ENCODE measurements at regions of chr2 and their contacts with region 1.

Region 1: GRCh38 chr2:174341286-174341994 is 6.7 kb downstream of the SP9 start:
- DNase-seq: peak; percentile 83
- H3K4me3 Mint-ChIP-seq: peak overlapping the region; percentile 64
- H3K27ac Mint-ChIP-seq: peak overlapping the region; percentile 84
- H3K4me1 Mint-ChIP-seq: peaks cover 41% of the 10 kb centered on the region
- H3K27me3 Mint-ChIP-seq: peaks cover 68% of the 10 kb centered on the region

Region 2: GRCh38 chr2:173402405-173402974 is 939.0 kb before region 1 on chr2:
- CTCF ChIA-PET with region 1: interaction called, 13 read pairs
- POLR2A ChIA-PET with region 1: no interaction called
- DNase-seq: peak; percentile 81
- H3K4me3 Mint-ChIP-seq: no peak overlapping the region
- H3K27ac Mint-ChIP-seq: no peak overlapping the region
- H3K4me1 Mint-ChIP-seq: peaks cover 5% of the 10 kb centered on the region
- H3K27me3 Mint-ChIP-seq: peaks cover 56% of the 10 kb centered on the region

Region 3: DNA sequence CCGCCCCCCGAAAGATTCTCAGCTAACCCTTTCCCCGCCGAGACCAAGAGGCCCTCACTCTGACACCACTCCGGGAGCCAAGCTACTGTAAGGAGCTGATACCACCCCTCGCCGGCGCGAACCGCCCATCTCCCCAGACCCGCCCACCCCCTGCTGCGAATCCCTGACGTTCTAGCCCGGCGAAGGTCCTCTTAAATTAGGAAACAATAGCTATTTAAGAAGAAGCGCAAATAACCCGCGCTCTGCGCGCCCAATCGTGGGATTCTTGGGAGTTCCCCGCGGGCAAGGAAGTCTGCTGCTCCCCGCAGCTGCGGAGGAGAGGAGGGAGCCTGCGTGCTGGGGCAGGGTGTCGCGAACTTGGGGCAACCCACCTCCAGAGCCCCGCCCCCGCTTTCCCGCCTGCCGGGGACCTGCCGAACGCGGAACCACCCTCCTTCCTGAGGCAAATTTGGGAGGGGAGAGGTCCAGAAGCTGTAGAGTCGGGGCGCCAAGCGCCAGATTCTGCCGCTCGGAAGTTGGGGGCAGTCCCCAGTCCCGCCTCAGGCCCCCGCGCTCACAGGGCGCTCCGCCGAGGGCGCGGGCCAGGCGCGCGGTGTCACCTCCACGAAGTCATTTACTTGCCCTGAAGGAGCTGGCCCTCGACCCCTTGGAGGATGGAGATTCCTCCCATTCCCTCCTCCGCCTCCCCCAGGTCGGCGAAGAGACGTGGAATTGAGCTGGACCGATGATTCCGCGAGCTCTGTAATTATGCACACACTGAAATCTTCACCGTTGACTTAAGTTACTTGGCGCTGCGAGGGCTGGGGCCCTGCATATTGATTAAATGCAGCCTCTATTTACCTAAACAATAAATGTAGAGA is 15.0 kb before region 1 on chr2:
- CTCF ChIA-PET with region 1: interaction called, 42 read pairs
- POLR2A ChIA-PET with region 1: no interaction called
- DNase-seq: no peak
- H3K4me3 Mint-ChIP-seq: peak overlapping the region; percentile 60
- H3K27ac Mint-ChIP-seq: no peak overlapping the region
- H3K4me1 Mint-ChIP-seq: peaks cover 29% of the 10 kb centered on the region
- H3K27me3 Mint-ChIP-seq: peaks cover 87% of the 10 kb centered on the region

Measured in activated CD4-positive, alpha-beta T cell treated with anti-CD3 and anti-CD28 coated beads, Interleukin-2, amount 10 ng/mL, durations not matched to agents 7 days and 5 days (primary cell).